Sigmoid colon (tissue), 7 donors: ENCODE measurements at regions of chr19 and their contacts with region 1.

Region 1: GRCh38 chr19:56748378-56748777 is 76.8 kb upstream of the ZNF835 start:
- DNase-seq: no peak
- H3K4me3 ChIP-seq: no peak overlapping the region
- H3K27ac ChIP-seq: no peak overlapping the region
- H3K4me1 ChIP-seq: peaks cover 0 to 8% (median 0%) of the 10 kb centered on the region in 4 donors
- H3K27me3 ChIP-seq: no peaks in the 10 kb centered on the region
- CTCF ChIP-seq: peak; percentile 35 to 59 (median 49)
- EP300 ChIP-seq: no peak
- POLR2A ChIP-seq: no peak

Region 2: GRCh38 chr19:57068921-57069697 is 320.7 kb after region 1 on chr19:
- intact Hi-C with region 1: loop called (anchors 1 kb)
- DNase-seq: peak; percentile 73
- H3K4me3 ChIP-seq: no peak overlapping the region
- H3K27ac ChIP-seq: no peak overlapping the region
- H3K4me1 ChIP-seq: no peaks in the 10 kb centered on the region
- H3K27me3 ChIP-seq: no peaks in the 10 kb centered on the region
- CTCF ChIP-seq: peak in 3 of 4 experiments; percentile 18 to 48 (median 47)
- EP300 ChIP-seq: no peak
- POLR2A ChIP-seq: no peak

Region 3: DNA sequence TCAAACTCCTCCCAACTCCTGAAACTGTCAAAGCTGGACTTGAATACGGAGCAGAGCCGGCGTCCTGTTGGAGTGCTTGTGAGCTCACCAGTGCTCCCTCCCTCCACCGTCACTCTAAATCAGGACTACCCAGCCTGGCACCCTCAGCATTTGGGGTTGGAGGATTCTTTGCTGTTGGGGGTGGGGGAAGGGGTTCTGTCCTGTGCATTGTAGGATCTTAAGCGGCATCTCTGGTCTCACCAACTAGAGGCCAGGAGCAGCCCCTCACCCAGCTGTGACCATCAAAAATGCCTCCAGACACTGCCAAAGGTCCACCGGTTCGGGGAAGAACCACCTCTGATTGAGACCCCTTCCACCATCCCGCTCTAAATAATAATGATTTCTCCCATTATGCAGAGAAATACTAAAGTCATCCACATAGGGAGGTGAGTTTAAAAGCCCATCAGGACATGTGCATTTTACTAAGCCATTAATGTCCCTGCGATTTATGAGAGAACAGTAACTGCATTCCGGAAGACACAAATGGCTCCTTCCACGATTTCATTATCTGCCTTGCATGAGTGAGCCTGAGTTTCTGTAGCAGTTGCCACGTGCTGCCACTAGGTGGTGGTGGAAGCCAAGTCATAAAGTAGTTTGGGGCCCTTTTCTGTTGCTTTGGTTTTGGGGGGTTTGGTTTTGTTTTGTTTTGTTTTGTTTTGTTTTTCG is 355.3 kb after region 1 on chr19:
- intact Hi-C with region 1: loop called (anchors 1 kb)
- DNase-seq: peak; percentile 76
- H3K4me3 ChIP-seq: peak overlapping the region in 1 of 4 donors; percentile 28
- H3K27ac ChIP-seq: no peak overlapping the region
- H3K4me1 ChIP-seq: peaks cover 0 to 20% (median 11%) of the 10 kb centered on the region in 4 donors
- H3K27me3 ChIP-seq: peaks cover 12 to 38% (median 20%) of the 10 kb centered on the region in 3 donors
- CTCF ChIP-seq: peak; percentile 75 to 84 (median 80)
- EP300 ChIP-seq: no peak
- POLR2A ChIP-seq: no peak